PC-9 (cell line): ENCODE measurements at regions of chrX and their contacts with region 1.

Region 1: GRCh38 chrX:128518508-128518907 is 466.3 kb upstream of the ACTRT1 start:
- DNase-seq: peak in 1 of 2 experiments; percentile 0
- H3K4me3 ChIP-seq: no peak overlapping the region
- H3K27ac ChIP-seq: no peak overlapping the region
- H3K4me1 ChIP-seq: no peaks in the 10 kb centered on the region
- H3K27me3 ChIP-seq: no peaks in the 10 kb centered on the region
- CTCF ChIP-seq: peak; percentile 69

Region 2: GRCh38 chrX:126770194-126770593 is 1748.3 kb before region 1 on chrX:
- CTCF ChIA-PET with region 1: no interaction called
- POLR2A ChIA-PET with region 1: no interaction called
- intact Hi-C with region 1: loop called (anchors 10 kb)
- DNase-seq: peak in 1 of 2 experiments; percentile 11
- H3K4me3 ChIP-seq: no peak overlapping the region
- H3K27ac ChIP-seq: no peak overlapping the region
- H3K4me1 ChIP-seq: no peaks in the 10 kb centered on the region
- H3K27me3 ChIP-seq: no peaks in the 10 kb centered on the region
- CTCF ChIP-seq: peak; percentile 95